A673 (cell line): ENCODE measurements at regions of chr3 and their contacts with region 1.

Region 1: DNA sequence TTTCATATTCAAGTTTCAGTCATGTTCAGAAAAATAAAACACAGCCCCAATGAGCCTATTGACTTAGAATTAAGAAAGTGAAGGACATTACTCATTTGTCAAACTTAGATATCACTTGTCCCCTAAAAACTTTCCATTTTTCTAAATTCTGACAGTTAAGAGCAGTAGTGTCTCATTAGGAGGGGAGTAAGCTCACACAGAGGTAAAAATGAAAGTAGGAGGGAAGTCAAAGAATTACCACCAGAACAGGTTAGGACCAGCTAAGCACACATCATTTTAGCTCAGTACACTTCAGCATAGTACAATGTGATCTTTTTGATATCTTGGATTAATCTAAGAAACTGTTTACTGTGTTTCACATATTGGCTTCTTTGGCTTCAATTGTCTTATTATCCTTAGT is 64.3 kb downstream of the OSTN start:
- DNase-seq: no peak
- H3K4me3 ChIP-seq: no peak overlapping the region
- H3K27ac ChIP-seq: no peak overlapping the region
- H3K4me1 ChIP-seq: no peaks in the 10 kb centered on the region
- H3K27me3 ChIP-seq: no peaks in the 10 kb centered on the region
- CTCF ChIP-seq: no peak

Region 2: DNA sequence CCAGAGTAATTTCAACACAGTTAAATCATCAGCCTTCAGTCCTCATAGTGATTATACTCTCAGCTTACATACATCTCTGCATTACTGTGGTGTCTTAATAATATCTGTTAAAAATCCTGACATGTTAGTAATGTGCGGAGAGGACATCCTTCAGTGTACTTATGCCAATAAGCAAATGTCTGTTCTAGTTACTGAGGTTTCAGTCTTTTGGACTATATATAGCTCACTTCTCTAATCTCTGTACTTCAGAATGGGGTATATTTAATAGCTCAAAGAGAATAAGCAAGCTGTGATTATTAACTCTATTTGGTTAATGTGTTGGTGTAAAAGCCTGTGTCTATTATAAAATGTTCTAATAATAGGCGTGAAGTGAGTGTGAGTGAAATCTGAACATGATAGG is 93.3 kb before region 1 on chr3:
- CTCF ChIA-PET with region 1: no interaction called
- POLR2A ChIA-PET with region 1: no interaction called
- intact Hi-C with region 1: no loop called
- DNase-seq: no peak
- H3K4me3 ChIP-seq: no peak overlapping the region
- H3K27ac ChIP-seq: no peak overlapping the region
- H3K4me1 ChIP-seq: no peaks in the 10 kb centered on the region
- H3K27me3 ChIP-seq: no peaks in the 10 kb centered on the region
- CTCF ChIP-seq: no peak

Region 3: DNA sequence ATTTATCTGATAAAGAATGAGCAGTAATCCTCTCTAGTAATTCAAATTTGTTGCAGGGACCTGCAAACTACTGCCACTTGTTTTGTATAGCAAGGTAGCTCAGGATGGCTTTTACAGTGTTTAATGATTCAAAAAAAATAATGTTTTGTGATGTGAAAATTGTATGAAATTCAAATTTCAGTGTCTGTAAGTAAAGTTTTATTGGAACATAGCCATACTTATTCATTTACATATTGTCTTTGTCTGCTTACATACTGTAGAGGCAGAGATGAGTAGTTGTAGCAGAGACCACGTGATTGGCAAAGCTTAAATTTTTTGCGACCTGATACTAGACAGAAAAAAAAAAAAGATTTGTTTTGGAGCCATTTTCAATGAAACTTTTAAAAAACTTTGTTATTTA is 73.5 kb after region 1 on chr3:
- CTCF ChIA-PET with region 1: no interaction called
- POLR2A ChIA-PET with region 1: no interaction called
- intact Hi-C with region 1: loop called (anchors 5 kb)
- DNase-seq: peak; percentile 38
- H3K4me3 ChIP-seq: no peak overlapping the region
- H3K27ac ChIP-seq: no peak overlapping the region
- H3K4me1 ChIP-seq: peaks cover 87% of the 10 kb centered on the region
- H3K27me3 ChIP-seq: no peaks in the 10 kb centered on the region
- CTCF ChIP-seq: no peak